ENCODE measurements at regions of chr1 and their contacts with region 1.

Region 1: DNA sequence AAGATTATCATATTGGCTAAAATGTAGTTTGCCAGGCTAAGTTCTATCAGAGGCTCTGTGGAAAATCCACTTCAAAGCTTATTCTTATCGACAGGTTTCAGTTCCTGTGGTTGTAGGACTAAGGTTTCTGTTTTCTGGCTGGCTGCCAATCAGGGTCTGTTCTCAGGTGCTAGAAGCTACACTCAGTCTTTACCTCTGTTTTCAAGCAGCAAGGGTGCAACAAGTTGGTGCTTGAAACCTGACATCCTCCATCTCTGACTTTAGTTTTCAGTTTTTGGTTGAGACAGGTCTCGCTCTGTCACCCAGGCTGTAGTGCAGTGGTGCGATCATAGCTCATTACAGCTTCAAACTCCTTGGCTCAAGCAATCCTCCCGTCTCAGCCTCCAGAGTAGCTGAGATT is 15.3 kb upstream of the TMCO2 start:
- DNase-seq: no peak
- H3K4me3 ChIP-seq: no peak overlapping the region
- H3K27ac ChIP-seq: no peak overlapping the region
- H3K4me1 ChIP-seq: no peaks in the 10 kb centered on the region
- H3K27me3 ChIP-seq: no peaks in the 10 kb centered on the region
- CTCF ChIP-seq: no peak

Region 2: GRCh38 chr1:39919545-39919944 is 312.9 kb before region 1 on chr1:
- CTCF ChIA-PET with region 1: no interaction called
- dilution Hi-C with region 1: no loop called
- in situ Hi-C with region 1: no loop called
- intact Hi-C with region 1: no loop called
- DNase-seq: peak; percentile 76
- H3K4me3 ChIP-seq: no peak overlapping the region
- H3K27ac ChIP-seq: no peak overlapping the region
- H3K4me1 ChIP-seq: no peaks in the 10 kb centered on the region
- H3K27me3 ChIP-seq: no peaks in the 10 kb centered on the region
- CTCF ChIP-seq: peak; percentile 71 to 84

Region 3: DNA sequence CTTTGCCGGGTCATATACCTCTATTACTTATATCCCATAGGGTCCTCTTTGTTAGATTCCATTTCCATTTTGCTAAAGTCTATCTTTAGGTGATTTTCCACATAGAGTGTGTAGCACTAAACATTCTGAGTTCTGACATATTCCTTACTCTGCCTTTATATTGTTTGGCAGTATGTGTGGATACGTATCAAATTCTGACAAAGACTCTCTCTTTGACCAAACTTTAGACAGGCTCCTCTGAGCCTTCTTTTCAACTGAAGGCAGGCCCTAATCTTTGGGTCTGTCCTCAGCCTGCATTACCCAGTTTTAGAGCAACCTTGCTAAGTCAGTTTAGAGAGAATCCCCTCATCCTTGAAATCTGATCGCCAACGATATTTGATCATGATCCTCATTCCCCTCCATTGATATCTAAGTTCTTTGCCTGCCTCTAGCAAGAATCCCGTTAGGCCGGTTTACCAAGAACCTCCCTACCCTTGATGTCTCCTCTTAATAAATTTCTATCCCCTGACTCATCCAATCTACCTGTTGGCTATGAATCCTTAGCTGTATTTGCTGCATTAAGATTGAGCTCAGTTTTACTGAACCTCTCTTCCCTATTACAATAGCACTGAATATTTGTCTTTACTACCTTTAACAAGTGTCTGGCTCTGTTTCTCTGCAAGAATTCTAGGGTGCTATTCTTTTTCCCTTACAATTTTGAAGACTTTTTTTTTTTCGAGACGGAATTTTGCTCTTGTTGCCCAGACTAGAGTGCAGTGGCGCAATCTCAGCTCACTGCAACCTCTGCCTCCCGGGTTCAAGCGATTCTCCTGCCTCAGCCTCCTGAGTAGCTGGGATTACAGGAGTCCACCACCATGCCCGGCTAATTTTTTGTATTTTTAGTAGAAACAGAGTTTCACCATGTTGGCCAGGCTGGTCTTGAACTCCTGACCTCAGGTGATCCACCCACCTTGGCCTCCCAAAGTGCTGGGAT is 124.9 kb before region 1 on chr1:
- CTCF ChIA-PET with region 1: no interaction called
- dilution Hi-C with region 1: no loop called
- in situ Hi-C with region 1: no loop called
- intact Hi-C with region 1: no loop called
- DNase-seq: peak; percentile 83
- H3K4me3 ChIP-seq: peak overlapping the region in 1 of 3 experiments; percentile 14
- H3K27ac ChIP-seq: peak overlapping the region; percentile 21
- H3K4me1 ChIP-seq: peaks cover 8% of the 10 kb centered on the region
- H3K27me3 ChIP-seq: no peaks in the 10 kb centered on the region
- CTCF ChIP-seq: no peak

Region 4: GRCh38 chr1:40210514-40211204 is 21.8 kb before region 1 on chr1:
- CTCF ChIA-PET with region 1: no interaction called
- dilution Hi-C with region 1: no loop called
- in situ Hi-C with region 1: no loop called
- intact Hi-C with region 1: no loop called
- DNase-seq: no peak
- H3K4me3 ChIP-seq: no peak overlapping the region
- H3K27ac ChIP-seq: no peak overlapping the region
- H3K4me1 ChIP-seq: no peaks in the 10 kb centered on the region
- H3K27me3 ChIP-seq: no peaks in the 10 kb centered on the region
- CTCF ChIP-seq: no peak

Region 5: DNA sequence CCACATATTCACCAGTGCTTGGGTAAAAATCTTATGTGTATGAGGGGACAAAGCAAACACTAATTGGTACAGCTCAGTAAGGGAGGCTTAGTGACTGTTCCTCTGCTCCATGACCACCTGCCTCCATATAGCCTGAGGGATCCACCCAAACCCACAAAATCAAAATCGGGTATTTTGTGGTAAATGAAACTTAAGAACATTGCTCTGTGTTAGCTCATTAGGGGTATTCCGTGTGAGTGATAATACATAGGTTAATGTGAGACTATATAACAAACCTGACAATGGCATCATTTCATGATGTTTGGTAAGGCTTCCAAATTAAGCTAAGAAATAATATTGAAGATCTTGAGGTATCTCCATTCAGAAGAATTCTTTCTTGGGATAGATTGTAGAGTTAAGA is 58.8 kb after region 1 on chr1:
- CTCF ChIA-PET with region 1: no interaction called
- dilution Hi-C with region 1: loop called (anchors 5 kb)
- in situ Hi-C with region 1: no loop called
- intact Hi-C with region 1: no loop called
- DNase-seq: no peak
- H3K4me3 ChIP-seq: no peak overlapping the region
- H3K27ac ChIP-seq: no peak overlapping the region
- H3K4me1 ChIP-seq: no peaks in the 10 kb centered on the region
- H3K27me3 ChIP-seq: no peaks in the 10 kb centered on the region
- CTCF ChIP-seq: no peak

Measured in mammary epithelial cell (primary cell).